ENCODE measurements at regions of chr3 and their contacts with region 1.

Region 1: GRCh38 chr3:6644070-6644929 is 216.6 kb upstream of the GRM7 start:
- DNase-seq: peak in 1 of 5 donors; percentile 26
- ATAC-seq: no peak
- H3K4me3 ChIP-seq: no peak overlapping the region
- H3K27ac ChIP-seq: no peak overlapping the region
- H3K4me1 ChIP-seq: no peaks in the 10 kb centered on the region
- H3K27me3 ChIP-seq: no peaks in the 10 kb centered on the region
- CTCF ChIP-seq: no peak
- POLR2A ChIP-seq: no peak

Region 2: DNA sequence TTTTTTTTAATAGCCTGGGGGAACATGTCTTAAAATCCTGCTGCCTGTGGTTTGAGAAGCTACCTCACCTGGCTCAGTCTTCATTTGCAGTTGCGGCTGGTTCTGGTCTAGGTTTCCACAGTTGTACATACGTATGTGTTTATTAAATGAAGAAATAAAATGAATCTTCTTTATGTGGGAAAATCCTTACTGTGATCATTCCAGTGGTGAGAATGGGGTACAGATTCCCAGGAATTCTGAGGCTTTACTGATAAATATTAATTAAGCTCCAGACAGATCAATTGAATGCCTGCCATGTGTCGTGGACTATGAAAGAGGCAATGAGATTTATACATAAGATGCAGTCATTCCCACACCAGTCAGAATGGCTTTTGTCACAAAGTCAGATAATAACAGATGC is 139.5 kb before region 1 on chr3:
- intact Hi-C with region 1: loop called in 1 of 10 experiments (anchors 5 kb)
- DNase-seq: no peak
- ATAC-seq: no peak
- H3K4me3 ChIP-seq: no peak overlapping the region
- H3K27ac ChIP-seq: no peak overlapping the region
- H3K4me1 ChIP-seq: no peaks in the 10 kb centered on the region
- H3K27me3 ChIP-seq: no peaks in the 10 kb centered on the region
- CTCF ChIP-seq: no peak
- POLR2A ChIP-seq: no peak